CD8-positive, alpha-beta T cell (primary cell): ENCODE measurements at regions of chr4 and their contacts with region 1.

Region 1: DNA sequence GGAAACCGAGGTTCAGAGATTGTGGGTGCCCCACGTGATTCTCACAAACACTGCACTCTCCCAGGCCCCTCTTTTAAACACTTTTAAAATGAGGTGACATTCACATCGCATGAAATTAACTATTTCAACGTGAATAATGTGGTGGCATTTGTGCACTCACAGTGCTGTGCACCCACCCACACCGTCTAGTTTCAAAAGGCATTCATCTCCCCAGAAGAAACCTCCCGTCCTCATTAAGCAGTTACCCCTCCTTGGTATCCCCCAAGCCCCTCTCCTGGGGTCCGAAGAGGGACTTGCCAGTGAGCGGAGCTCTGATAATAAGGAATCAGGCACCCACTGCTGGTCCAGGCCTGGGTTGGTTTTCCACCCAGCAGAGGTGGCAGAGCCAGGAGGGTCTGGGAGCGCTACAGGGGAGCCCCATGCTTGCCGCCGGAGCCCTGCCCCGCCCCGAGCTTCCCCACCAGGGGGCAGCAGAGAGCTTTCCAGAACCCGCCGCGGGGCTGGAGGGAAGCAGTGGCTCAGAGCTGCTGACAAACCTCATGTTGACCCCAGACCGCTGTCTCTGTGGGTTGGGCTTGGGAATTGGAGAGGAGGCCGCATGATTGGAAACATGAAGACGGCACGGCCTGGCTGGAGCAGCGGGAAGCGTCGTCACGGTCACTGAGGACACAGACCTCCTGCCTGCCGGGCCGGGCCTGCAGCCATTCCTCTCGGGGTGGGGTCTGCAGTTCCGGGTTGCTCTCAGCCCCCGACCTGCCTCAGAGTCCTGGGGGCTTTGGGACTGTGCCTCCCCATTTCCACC is 27.5 kb upstream of the HTRA3 start:
- DNase-seq: peak; percentile 65 to 90 (median 77)
- ATAC-seq: peak; percentile 82
- H3K4me3 ChIP-seq: no peak overlapping the region
- H3K4me3 Mint-ChIP-seq: no peak overlapping the region
- H3K27ac ChIP-seq: no peak overlapping the region
- H3K27ac Mint-ChIP-seq: peak overlapping the region; percentile 22
- H3K4me1 ChIP-seq: peaks cover 9% of the 10 kb centered on the region
- H3K4me1 Mint-ChIP-seq: peaks cover 12% of the 10 kb centered on the region
- H3K27me3 ChIP-seq: no peaks in the 10 kb centered on the region
- H3K27me3 Mint-ChIP-seq: no peaks in the 10 kb centered on the region
- CTCF ChIP-seq: peak; percentile 95

Region 2: DNA sequence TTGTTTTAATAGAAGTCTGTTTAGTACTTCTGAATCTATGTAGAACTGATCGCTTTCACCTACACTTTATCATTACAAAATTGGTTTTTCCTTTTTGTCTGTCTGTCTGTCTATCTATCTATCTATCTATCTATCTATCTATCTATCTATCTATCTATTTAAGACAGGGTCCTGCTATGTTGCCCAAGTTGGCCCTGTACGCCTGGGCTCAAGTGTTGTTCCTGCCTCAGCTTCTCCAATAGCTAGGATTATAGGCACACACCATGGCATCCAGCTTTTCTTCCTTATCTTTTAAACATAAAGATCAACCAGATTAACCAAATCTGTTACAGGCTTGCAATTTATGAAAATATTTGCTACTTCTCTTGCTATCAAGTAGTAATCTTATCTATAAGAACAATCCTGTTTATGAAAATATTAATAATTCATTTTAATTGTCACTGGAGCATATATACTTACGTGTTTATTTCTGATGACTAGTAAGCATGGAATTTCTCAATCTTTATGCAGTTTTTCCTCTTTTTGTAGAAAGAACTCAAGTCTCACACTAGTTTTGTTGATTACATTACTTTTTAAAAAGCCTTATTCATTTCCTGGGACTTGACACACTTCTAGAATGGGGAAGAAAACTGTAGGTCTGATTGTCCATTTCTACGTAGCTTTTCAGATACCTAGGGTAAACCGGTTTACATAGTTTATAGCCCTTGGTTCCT is 1435.0 kb before region 1 on chr4:
- CTCF ChIA-PET with region 1: no interaction called
- POLR2A ChIA-PET with region 1: no interaction called
- intact Hi-C with region 1: no loop called
- DNase-seq: no peak
- ATAC-seq: no peak
- H3K4me3 ChIP-seq: no peak overlapping the region
- H3K4me3 Mint-ChIP-seq: no peak overlapping the region
- H3K27ac ChIP-seq: no peak overlapping the region
- H3K27ac Mint-ChIP-seq: no peak overlapping the region
- H3K4me1 ChIP-seq: peaks cover 2% of the 10 kb centered on the region
- H3K4me1 Mint-ChIP-seq: peaks cover 46% of the 10 kb centered on the region
- H3K27me3 ChIP-seq: no peaks in the 10 kb centered on the region
- H3K27me3 Mint-ChIP-seq: no peaks in the 10 kb centered on the region
- CTCF ChIP-seq: no peak

Region 3: GRCh38 chr4:8158710-8159536 is 83.2 kb before region 1 on chr4 and contains the start of gene ABLIM2:
- CTCF ChIA-PET with region 1: no interaction called
- POLR2A ChIA-PET with region 1: no interaction called
- intact Hi-C with region 1: loop called in 1 of 2 experiments (anchors 5 kb)
- DNase-seq: peak; percentile 97 to 100 (median 99)
- ATAC-seq: peak; percentile 99
- H3K4me3 ChIP-seq: peak within 1 kb of the TSS; percentile 90 to 97
- H3K4me3 Mint-ChIP-seq: peak within 1 kb of the TSS; percentile 89
- H3K27ac ChIP-seq: peak within 1 kb of the TSS; percentile 48 to 56
- H3K27ac Mint-ChIP-seq: peak within 1 kb of the TSS; percentile 72
- H3K4me1 ChIP-seq: peaks cover 18% of the 10 kb centered on the region
- H3K4me1 Mint-ChIP-seq: peaks cover 16% of the 10 kb centered on the region
- H3K27me3 ChIP-seq: peaks cover 0 to 6% of the 10 kb centered on the region in 2 experiments
- H3K27me3 Mint-ChIP-seq: no peaks in the 10 kb centered on the region
- CTCF ChIP-seq: no peak
- total RNA-seq, gene ABLIM2: 1.2 to 1.6 TPM

Region 4: GRCh38 chr4:8198906-8199593 is 43.0 kb before region 1 on chr4 and contains the start of gene SH3TC1:
- CTCF ChIA-PET with region 1: interaction called, 7 read pairs
- POLR2A ChIA-PET with region 1: interaction called, 3 read pairs
- intact Hi-C with region 1: loop called in 1 of 2 experiments (anchors 1 kb)
- DNase-seq: peak; percentile 19 to 83 (median 59)
- ATAC-seq: peak; percentile 52
- H3K4me3 ChIP-seq: peak within 1 kb of the TSS; percentile 63 to 69
- H3K4me3 Mint-ChIP-seq: peak within 1 kb of the TSS; percentile 97
- H3K27ac ChIP-seq: peak within 1 kb of the TSS; percentile 43 to 61
- H3K27ac Mint-ChIP-seq: peak within 1 kb of the TSS; percentile 97
- H3K4me1 ChIP-seq: peaks cover 47% of the 10 kb centered on the region
- H3K4me1 Mint-ChIP-seq: peaks cover 45% of the 10 kb centered on the region
- H3K27me3 ChIP-seq: no peaks in the 10 kb centered on the region
- H3K27me3 Mint-ChIP-seq: no peaks in the 10 kb centered on the region
- CTCF ChIP-seq: no peak
- total RNA-seq, gene SH3TC1: 90.7 to 102 TPM

Region 5: DNA sequence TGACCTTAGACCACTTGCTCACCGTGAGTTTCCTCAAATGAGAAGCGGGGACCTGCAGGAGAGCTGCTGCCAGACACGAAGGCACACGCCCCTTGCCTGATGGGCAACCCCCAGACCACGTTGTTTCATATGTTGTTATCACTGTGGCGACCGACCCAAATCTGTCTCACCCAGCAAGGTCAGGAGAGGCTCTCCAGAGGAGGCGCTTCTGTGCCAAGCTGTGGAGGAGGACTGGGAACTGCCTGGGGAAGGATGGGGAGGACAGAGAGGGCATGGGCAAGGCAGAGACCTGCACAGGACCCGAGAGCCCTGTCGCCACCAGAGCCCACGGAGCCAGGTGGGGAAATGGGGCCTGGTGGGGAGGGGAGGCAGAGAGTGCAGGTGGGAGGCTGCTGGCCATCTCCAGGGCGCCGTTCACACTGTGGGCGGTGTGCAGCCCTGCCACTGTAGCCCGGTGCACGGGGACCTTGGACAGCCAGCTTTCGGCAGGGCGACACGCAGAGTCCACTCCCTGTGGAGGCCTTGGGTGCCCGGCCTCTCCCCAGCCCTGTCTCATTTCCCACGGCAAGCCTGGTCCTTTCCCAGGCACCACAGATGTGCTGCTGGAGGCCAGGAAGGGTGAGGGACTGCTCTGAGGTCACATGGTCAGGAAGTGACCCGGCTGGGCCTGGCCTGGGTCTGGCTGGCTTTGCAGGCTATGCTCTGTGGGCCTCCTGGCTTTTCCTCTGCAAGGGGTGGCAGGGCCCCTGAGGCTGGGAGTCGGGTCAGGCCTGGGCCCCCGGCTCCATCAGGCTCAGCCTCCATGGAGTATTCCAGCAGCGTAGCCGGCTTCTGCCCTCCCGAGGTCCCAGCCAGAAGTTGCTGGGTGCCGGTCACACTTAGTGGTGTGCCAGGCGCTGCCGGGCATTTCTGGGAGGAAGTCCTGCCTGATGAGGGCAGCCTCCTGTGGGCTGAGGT is 30.7 kb after region 1 on chr4:
- CTCF ChIA-PET with region 1: interaction called, 3 read pairs
- POLR2A ChIA-PET with region 1: no interaction called
- intact Hi-C with region 1: loop called in 1 of 2 experiments (anchors 1 kb)
- DNase-seq: no peak
- ATAC-seq: no peak
- H3K4me3 ChIP-seq: no peak overlapping the region
- H3K4me3 Mint-ChIP-seq: no peak overlapping the region
- H3K27ac ChIP-seq: no peak overlapping the region
- H3K27ac Mint-ChIP-seq: no peak overlapping the region
- H3K4me1 ChIP-seq: no peaks in the 10 kb centered on the region
- H3K4me1 Mint-ChIP-seq: no peaks in the 10 kb centered on the region
- H3K27me3 ChIP-seq: no peaks in the 10 kb centered on the region
- H3K27me3 Mint-ChIP-seq: peaks cover 28% of the 10 kb centered on the region
- CTCF ChIP-seq: no peak

Region 6: DNA sequence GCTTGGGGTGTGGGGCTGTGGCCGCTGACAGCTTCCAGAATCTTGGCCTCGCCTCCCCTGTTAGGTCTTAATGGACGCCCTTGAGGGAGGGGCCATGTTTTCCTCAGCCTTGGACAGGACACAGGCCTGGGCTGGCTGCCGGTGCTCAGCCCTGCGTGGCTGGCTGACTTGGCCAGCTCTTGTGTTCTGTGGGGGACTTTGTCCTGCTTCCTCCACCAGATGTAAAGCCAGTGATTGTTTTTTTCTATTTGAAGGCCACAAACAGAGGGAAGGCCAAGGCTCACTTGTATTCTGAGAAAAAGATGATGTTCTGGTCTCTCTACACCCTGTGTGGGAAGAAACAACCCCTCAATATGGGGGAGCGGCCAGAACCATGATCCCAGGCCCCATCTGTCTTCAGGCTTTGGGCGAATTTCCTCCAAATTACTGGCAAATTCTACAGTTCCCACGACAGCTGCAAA is 98.7 kb after region 1 on chr4:
- CTCF ChIA-PET with region 1: no interaction called
- POLR2A ChIA-PET with region 1: no interaction called
- intact Hi-C with region 1: no loop called
- DNase-seq: no peak
- ATAC-seq: no peak
- H3K4me3 ChIP-seq: no peak overlapping the region
- H3K4me3 Mint-ChIP-seq: no peak overlapping the region
- H3K27ac ChIP-seq: no peak overlapping the region
- H3K27ac Mint-ChIP-seq: no peak overlapping the region
- H3K4me1 ChIP-seq: no peaks in the 10 kb centered on the region
- H3K4me1 Mint-ChIP-seq: no peaks in the 10 kb centered on the region
- H3K27me3 ChIP-seq: no peaks in the 10 kb centered on the region
- H3K27me3 Mint-ChIP-seq: no peaks in the 10 kb centered on the region
- CTCF ChIP-seq: no peak

Region 7: DNA sequence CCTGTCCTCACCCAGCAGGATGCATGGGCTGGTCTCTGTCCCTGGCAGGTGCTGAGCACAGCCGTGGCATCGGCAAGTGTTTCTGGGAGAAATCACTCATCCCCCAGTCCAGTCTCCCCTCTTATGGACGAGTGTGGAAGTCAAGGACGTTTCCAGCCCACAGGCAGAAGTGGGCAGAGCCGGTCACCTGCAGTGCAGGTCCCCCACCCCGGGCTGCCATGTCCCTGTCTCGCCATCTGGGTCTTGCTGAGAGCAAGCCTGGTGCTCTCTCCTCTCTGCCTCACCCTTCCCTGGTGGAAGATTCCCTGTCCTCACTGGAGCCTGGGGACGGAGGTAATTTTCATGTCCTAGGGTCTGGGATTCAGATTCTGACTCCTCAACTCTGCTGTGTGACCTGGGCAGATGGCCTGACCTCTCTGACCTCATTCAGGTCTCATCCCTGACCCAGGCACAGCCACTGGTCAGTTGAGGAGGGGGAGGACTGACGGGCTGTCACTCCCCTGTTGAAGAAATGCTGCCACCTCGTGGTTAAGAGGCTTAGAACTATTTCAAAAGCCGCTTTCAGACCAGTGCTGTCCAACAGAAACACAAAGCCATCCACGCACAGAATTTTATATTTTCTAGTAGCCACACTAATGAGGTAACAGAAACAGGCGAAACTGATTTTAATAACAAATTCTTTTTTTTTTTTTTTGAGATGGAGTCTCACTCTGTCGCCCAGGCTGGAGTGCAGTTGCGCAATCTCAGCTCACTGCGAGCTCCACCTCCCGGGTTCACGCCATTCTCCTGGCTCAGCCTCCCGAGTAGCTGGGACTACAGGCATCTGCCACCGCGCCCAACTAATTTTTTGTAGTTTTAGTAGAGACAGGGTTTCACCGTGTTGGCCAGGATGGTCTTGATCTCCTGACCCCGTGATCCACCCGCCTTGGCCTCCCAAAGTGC is 352.3 kb after region 1 on chr4:
- CTCF ChIA-PET with region 1: no interaction called
- POLR2A ChIA-PET with region 1: no interaction called
- intact Hi-C with region 1: loop called in 1 of 2 experiments (anchors 5 kb)
- DNase-seq: no peak
- ATAC-seq: no peak
- H3K4me3 ChIP-seq: no peak overlapping the region
- H3K4me3 Mint-ChIP-seq: no peak overlapping the region
- H3K27ac ChIP-seq: no peak overlapping the region
- H3K27ac Mint-ChIP-seq: no peak overlapping the region
- H3K4me1 ChIP-seq: no peaks in the 10 kb centered on the region
- H3K4me1 Mint-ChIP-seq: no peaks in the 10 kb centered on the region
- H3K27me3 ChIP-seq: peaks cover 2% of the 10 kb centered on the region in 2 experiments
- H3K27me3 Mint-ChIP-seq: peaks cover 21% of the 10 kb centered on the region
- CTCF ChIP-seq: no peak

Region 8: GRCh38 chr4:10129196-10130177 is 1887.4 kb after region 1 on chr4:
- CTCF ChIA-PET with region 1: no interaction called
- POLR2A ChIA-PET with region 1: no interaction called
- intact Hi-C with region 1: no loop called
- DNase-seq: no peak
- ATAC-seq: no peak
- H3K4me3 ChIP-seq: no peak overlapping the region
- H3K4me3 Mint-ChIP-seq: no peak overlapping the region
- H3K27ac ChIP-seq: no peak overlapping the region
- H3K27ac Mint-ChIP-seq: no peak overlapping the region
- H3K4me1 ChIP-seq: peaks cover 5% of the 10 kb centered on the region
- H3K4me1 Mint-ChIP-seq: peaks cover 8% of the 10 kb centered on the region
- H3K27me3 ChIP-seq: no peaks in the 10 kb centered on the region
- H3K27me3 Mint-ChIP-seq: no peaks in the 10 kb centered on the region
- CTCF ChIP-seq: no peak